Tibial artery (tissue), 4 donors: ENCODE measurements at regions of chr9 and their contacts with region 1.

Region 1: DNA sequence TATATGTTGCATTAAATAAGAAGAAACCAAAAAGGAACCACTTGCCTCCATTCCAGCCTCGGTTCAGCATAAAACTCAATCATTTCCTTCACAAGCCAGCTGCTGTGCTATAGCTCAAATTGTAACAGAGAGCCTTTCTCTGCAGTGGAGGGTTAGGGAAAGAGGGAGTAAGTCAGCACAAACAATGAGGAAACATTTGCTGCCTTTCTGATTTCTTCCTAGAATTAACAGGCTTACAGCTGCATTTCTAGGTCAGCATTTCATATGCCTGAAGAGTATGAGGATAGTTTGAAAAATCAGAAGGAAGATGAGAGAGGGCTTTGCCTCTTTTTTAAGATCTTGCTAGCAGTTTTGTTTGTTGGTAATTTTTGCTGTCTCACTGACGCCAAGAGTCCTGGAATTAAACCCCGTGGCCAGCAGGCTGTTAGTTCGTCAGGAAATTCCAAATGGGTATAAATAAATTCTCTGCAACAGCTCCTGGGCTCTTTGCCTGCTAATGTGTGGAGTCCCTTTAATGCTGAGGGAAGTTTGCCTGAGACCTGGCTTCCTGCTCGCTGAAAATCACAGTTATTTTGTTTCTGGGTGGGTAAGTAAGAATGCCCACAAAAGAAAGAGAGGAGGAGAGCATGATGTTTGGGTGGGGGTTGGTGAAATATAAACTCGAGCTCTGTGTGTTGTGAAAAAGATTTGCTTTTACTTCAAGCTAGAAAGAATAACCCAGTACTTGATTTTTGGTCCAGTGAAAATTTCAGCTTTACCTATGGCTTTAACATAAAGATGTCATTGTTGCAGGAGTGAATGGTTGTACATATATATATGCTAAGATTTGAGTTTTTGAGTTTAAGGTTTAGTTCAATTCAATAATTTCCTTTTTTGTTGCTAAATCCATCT is 148.1 kb upstream of the DMRT1 start:
- DNase-seq: peak; percentile 70 to 82
- H3K4me3 ChIP-seq: peak overlapping the region; percentile 43 to 46
- H3K27ac ChIP-seq: peak overlapping the region; percentile 82 to 87
- H3K4me1 ChIP-seq: peaks cover 0 to 89% (median 78%) of the 10 kb centered on the region in 4 donors
- H3K27me3 ChIP-seq: no peaks in the 10 kb centered on the region
- CTCF ChIP-seq: peak in 1 of 2 experiments; percentile 3

Region 2: GRCh38 chr9:534886-535285 is 158.6 kb before region 1 on chr9:
- intact Hi-C with region 1: no loop called
- DNase-seq: peak; percentile 41 to 71
- H3K4me3 ChIP-seq: no peak overlapping the region
- H3K27ac ChIP-seq: no peak overlapping the region
- H3K4me1 ChIP-seq: peaks cover 0 to 15% (median 12%) of the 10 kb centered on the region in 4 donors
- H3K27me3 ChIP-seq: no peaks in the 10 kb centered on the region
- CTCF ChIP-seq: no peak

Region 3: DNA sequence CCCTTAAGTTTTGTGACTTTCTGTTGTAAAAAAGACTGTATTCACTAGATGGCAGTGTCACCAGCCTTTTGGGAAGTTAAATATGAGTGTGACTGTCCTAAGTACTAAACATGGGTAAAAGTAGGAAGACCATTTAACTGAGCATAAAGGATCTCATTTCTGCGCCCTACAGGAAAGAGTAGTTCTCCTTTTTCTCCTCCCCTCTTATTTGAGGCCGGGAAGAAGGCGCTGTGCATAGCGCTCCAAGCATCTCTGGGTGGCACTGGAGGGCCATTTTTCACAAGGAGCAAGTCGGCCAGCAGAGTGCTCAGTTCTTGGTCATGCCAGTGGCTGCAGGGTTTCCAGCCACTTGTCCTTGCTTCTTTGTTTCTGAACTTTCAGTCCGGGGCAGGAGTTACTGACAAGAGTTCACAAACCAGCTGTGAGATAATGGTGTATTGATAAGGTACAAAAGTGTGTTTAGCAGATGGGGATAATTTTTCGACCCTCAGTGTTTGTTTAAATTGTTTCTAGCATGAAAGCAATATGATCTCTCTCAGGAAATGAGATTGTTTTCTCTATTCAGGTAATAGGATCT is 79.6 kb before region 1 on chr9:
- intact Hi-C with region 1: no loop called
- DNase-seq: peak; percentile 85 to 93
- H3K4me3 ChIP-seq: no peak overlapping the region
- H3K27ac ChIP-seq: peak overlapping the region; percentile 71 to 77
- H3K4me1 ChIP-seq: peaks cover 0 to 30% (median 19%) of the 10 kb centered on the region in 4 donors
- H3K27me3 ChIP-seq: no peaks in the 10 kb centered on the region
- CTCF ChIP-seq: peak; percentile 90 to 91

Region 4: DNA sequence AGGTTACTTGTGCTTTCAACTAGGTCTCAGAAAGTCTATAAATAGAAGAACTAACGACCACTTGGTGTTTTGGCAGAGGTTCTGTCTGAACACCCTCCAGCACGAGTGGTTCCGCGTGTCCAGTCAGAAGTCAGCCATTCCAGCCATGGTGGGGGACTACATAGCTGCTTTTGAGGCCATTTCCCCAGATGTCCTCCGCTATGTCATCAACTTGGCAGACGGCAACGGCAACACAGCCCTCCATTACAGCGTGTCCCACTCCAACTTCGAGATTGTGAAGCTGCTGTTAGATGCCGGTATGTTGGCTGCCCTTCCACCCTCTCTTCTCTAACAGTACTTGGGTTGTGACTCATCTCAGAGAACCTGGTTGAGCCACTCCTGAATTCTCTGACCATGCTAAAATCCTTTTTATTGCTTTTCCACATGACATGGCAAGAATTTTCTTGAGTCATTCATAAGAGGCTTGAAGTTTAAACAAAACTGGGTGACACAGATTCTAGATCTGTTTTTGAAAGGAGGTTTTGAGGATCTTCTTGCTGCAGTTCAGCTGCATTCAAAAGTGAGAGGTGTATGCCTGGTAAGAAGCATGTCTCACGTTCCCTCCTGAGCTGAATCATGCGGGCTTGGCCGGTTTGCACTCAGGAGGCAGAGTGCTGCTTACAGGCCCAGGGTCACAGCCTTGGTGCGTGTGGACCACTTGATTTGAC is 44.9 kb after region 1 on chr9:
- intact Hi-C with region 1: loop called (anchors 5 kb)
- DNase-seq: peak; percentile 69 to 85
- H3K4me3 ChIP-seq: peak overlapping the region in 1 of 2 donors; percentile 4
- H3K27ac ChIP-seq: peak overlapping the region; percentile 68 to 78
- H3K4me1 ChIP-seq: peaks cover 0 to 87% (median 55%) of the 10 kb centered on the region in 4 donors
- H3K27me3 ChIP-seq: no peaks in the 10 kb centered on the region
- CTCF ChIP-seq: no peak

Region 5: GRCh38 chr9:875119-875962 is 181.9 kb after region 1 on chr9:
- intact Hi-C with region 1: no loop called
- DNase-seq: no peak
- H3K4me3 ChIP-seq: no peak overlapping the region
- H3K27ac ChIP-seq: no peak overlapping the region
- H3K4me1 ChIP-seq: no peaks in the 10 kb centered on the region
- H3K27me3 ChIP-seq: peaks cover 0 to 6% of the 10 kb centered on the region in 2 donors
- CTCF ChIP-seq: no peak

Region 6: GRCh38 chr9:1120500-1121165 is 427.2 kb after region 1 on chr9:
- intact Hi-C with region 1: no loop called
- DNase-seq: no peak
- H3K4me3 ChIP-seq: no peak overlapping the region
- H3K27ac ChIP-seq: no peak overlapping the region
- H3K4me1 ChIP-seq: no peaks in the 10 kb centered on the region
- H3K27me3 ChIP-seq: no peaks in the 10 kb centered on the region
- CTCF ChIP-seq: no peak